Caco-2 (cell line): ENCODE measurements at regions of chrX and their contacts with region 1.

Region 1: GRCh38 chrX:130268500-130269170 is at the start of gene ZNF280C:
- DNase-seq: peak; percentile 92 to 93
- H3K4me3 ChIP-seq: peak within 1 kb of the TSS; percentile 78
- H3K4me3 Mint-ChIP-seq: peak within 1 kb of the TSS; percentile 82
- H3K27ac Mint-ChIP-seq: peak within 1 kb of the TSS; percentile 53
- H3K4me1 ChIP-seq: no peaks in the 10 kb centered on the region
- H3K4me1 Mint-ChIP-seq: no peaks in the 10 kb centered on the region
- H3K27me3 ChIP-seq: no peaks in the 10 kb centered on the region
- H3K27me3 Mint-ChIP-seq: peaks cover 3% of the 10 kb centered on the region
- CTCF ChIP-seq: peak in 1 of 2 experiments; percentile 38
- total RNA-seq, gene ZNF280C: 5.6 and 6.4 TPM in 2 replicates

Region 2: GRCh38 chrX:130108647-130109428 is 159.8 kb before region 1 on chrX:
- CTCF ChIA-PET with region 1: no interaction called
- POLR2A ChIA-PET with region 1: no interaction called
- intact Hi-C with region 1: loop called (anchors 1 kb)
- DNase-seq: peak; percentile 53 to 58
- H3K4me3 ChIP-seq: peak overlapping the region; percentile 70
- H3K4me3 Mint-ChIP-seq: peak overlapping the region; percentile 90
- H3K27ac Mint-ChIP-seq: peak overlapping the region; percentile 83
- H3K4me1 ChIP-seq: peaks cover 7% of the 10 kb centered on the region; the same call in 1 of the 2 replicates
- H3K4me1 Mint-ChIP-seq: peaks cover 12% of the 10 kb centered on the region
- H3K27me3 ChIP-seq: no peaks in the 10 kb centered on the region
- H3K27me3 Mint-ChIP-seq: no peaks in the 10 kb centered on the region
- CTCF ChIP-seq: peak in 1 of 2 experiments; percentile 25

Region 3: DNA sequence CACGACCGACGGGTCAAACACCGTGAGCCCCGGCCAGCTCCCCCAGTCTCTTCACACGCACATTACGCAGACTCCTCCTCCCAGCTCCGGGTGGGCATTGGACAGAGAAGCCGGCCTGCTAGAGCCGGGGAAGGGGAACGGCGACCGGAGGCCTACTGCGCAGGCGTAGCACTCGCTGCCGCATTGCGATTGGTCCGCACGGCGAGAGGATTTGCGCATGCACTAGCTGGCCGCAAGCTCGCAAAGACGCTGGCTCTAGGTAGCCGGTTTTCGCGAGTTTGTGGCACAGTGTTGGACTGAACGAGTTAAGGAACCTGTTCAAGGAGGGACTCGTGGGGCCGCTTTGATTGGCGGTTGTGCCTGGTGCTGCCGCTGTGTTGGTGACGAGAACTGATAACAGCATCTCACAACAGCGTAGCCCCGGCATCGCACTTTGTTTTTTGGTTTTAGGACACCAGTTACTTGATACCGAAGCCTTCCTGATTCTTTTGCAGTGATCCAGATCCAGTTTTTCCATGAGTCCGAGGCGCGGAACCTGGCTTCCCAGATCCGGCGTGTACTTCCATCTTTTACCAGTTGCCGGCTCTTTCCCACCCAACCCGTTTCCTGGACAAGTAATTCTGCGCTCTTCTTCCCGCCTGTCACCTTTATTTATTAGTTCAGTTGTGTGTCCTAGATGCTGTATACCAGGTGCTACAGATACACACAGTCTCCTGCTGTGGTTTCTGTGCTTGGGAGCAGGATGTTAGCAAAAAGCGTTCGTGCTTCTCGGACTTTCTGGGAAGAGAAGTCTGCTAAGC is 102.7 kb before region 1 on chrX and contains the start of gene AIFM1:
- CTCF ChIA-PET with region 1: no interaction called
- POLR2A ChIA-PET with region 1: no interaction called
- intact Hi-C with region 1: loop called (anchors 5 kb)
- DNase-seq: peak; percentile 92 to 94
- H3K4me3 ChIP-seq: peak within 1 kb of the TSS; percentile 81
- H3K4me3 Mint-ChIP-seq: peak within 1 kb of the TSS; percentile 88
- H3K27ac Mint-ChIP-seq: peak within 1 kb of the TSS; percentile 95
- H3K4me1 ChIP-seq: no peaks in the 10 kb centered on the region
- H3K4me1 Mint-ChIP-seq: no peaks in the 10 kb centered on the region
- H3K27me3 ChIP-seq: no peaks in the 10 kb centered on the region
- H3K27me3 Mint-ChIP-seq: no peaks in the 10 kb centered on the region
- CTCF ChIP-seq: no peak
- total RNA-seq, gene AIFM1: 53.0 and 55.4 TPM in 2 replicates

Region 4: GRCh38 chrX:130224518-130225209 is 44.0 kb before region 1 on chrX:
- CTCF ChIA-PET with region 1: no interaction called
- POLR2A ChIA-PET with region 1: no interaction called
- intact Hi-C with region 1: no loop called
- DNase-seq: peak in 1 of 2 experiments; percentile 12
- H3K4me3 ChIP-seq: no peak overlapping the region
- H3K4me3 Mint-ChIP-seq: no peak overlapping the region
- H3K27ac Mint-ChIP-seq: no peak overlapping the region
- H3K4me1 ChIP-seq: peaks cover 12% of the 10 kb centered on the region
- H3K4me1 Mint-ChIP-seq: no peaks in the 10 kb centered on the region
- H3K27me3 ChIP-seq: no peaks in the 10 kb centered on the region
- H3K27me3 Mint-ChIP-seq: no peaks in the 10 kb centered on the region
- CTCF ChIP-seq: no peak

Region 5: DNA sequence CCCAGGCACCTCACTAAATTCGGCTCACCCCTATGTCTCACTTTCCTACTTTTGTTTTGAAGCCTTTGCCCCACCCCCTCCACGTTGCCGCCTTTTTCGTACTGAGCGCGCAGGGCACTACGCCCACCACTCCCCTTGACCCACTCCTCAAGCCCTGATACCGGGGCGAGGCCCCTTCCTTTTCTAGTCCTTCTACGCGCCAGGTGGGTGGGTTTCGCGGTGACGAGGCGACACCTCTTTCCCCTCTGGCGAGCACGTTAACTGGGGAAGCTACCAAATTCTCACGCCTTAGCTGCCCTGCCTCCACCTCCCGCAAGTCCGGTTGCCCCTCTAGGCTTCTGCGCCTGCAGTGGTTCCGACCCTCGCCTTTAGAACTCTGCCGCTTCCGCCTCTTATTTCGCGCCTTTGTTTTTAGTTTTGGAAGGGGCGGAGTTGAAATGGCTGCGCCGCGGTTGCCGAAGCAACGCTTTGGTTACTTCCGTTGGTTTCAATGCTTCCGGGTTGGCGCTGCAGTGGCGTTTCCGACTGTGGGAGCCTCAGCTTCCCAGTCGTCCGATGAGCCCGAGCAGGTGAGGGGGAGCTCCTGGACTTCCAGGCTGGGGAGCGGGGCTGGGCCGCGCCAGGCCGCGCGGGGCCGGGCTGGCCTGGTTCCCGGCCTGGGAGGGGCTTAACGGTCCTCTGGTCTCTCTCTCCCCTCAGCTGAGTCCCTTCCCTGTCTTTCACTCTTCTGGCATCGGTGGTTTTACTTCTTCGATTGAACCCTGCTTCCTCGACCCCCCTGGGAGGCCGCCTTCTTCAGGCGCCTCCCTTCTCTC is 71.0 kb after region 1 on chrX and contains the start of gene SLC25A14:
- CTCF ChIA-PET with region 1: no interaction called
- POLR2A ChIA-PET with region 1: no interaction called
- intact Hi-C with region 1: loop called (anchors 2 kb)
- DNase-seq: peak; percentile 72 to 75
- H3K4me3 ChIP-seq: peak within 1 kb of the TSS; percentile 72
- H3K4me3 Mint-ChIP-seq: peak within 1 kb of the TSS; percentile 99
- H3K27ac Mint-ChIP-seq: peak within 1 kb of the TSS; percentile 99
- H3K4me1 ChIP-seq: no peaks in the 10 kb centered on the region
- H3K4me1 Mint-ChIP-seq: no peaks in the 10 kb centered on the region
- H3K27me3 ChIP-seq: no peaks in the 10 kb centered on the region
- H3K27me3 Mint-ChIP-seq: no peaks in the 10 kb centered on the region
- CTCF ChIP-seq: no peak
- total RNA-seq, gene SLC25A14: 7.4 and 8.3 TPM in 2 replicates

Region 6: GRCh38 chrX:130413415-130413814 is 144.8 kb after region 1 on chrX:
- CTCF ChIA-PET with region 1: no interaction called
- POLR2A ChIA-PET with region 1: no interaction called
- intact Hi-C with region 1: no loop called
- DNase-seq: no peak
- H3K4me3 ChIP-seq: no peak overlapping the region
- H3K4me3 Mint-ChIP-seq: no peak overlapping the region
- H3K27ac Mint-ChIP-seq: no peak overlapping the region
- H3K4me1 ChIP-seq: no peaks in the 10 kb centered on the region
- H3K4me1 Mint-ChIP-seq: no peaks in the 10 kb centered on the region
- H3K27me3 ChIP-seq: no peaks in the 10 kb centered on the region
- H3K27me3 Mint-ChIP-seq: no peaks in the 10 kb centered on the region
- CTCF ChIP-seq: no peak